Prostate gland (tissue), 2 donors: ENCODE measurements at regions of chr22 and their contacts with region 1.

Region 1: DNA sequence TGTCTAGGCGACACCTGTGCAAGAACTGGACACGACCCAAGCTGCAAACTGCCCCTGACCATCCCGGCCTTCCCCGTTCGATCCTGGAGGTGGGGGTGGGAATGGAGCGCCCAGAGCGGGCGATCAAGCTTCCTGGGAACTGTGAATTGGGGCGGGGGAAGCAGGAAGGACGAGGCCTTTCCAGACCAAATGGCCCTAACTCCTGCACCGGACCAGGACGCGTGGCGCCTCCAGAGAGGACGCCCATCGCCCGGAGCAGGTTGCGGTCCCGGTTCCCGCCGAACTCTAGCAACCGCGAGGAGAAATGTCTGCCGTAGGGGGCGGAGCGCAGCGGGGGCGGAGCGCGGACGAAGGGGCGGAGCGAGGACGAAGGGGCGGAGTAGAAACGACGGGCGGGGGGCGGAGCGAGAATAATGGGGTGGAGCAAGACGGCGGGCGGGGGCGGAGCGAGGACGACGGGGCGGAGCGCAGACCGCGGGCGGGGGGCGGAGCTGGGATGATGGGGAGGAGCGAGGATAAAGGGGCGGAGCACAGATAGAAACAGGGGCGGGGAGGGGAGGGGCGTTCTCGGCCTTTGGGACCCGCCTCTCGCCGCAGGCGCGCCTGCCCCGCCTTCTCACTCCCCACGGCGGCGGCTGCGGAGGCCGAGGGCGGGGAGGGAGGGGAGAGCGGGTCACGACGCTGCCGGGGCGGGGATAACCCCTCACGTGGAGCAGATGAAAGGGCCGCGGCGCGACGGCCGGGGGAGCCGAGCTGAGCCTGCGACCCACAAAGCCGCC is at the start of gene ZNRF3:
- DNase-seq: peak; percentile 96
- H3K4me3 ChIP-seq: peak within 1 kb of the TSS; percentile 63 to 70
- H3K27ac ChIP-seq: peak within 1 kb of the TSS; percentile 62 to 75
- H3K4me1 ChIP-seq: peaks cover 3% of the 10 kb centered on the region
- H3K27me3 ChIP-seq: no peaks in the 10 kb centered on the region
- CTCF ChIP-seq: peak in 1 of 4 experiments; percentile 16
- POLR2A ChIP-seq: peak; percentile 52
- total RNA-seq, gene ZNRF3: 38.5 to 46.1 TPM

Region 2: DNA sequence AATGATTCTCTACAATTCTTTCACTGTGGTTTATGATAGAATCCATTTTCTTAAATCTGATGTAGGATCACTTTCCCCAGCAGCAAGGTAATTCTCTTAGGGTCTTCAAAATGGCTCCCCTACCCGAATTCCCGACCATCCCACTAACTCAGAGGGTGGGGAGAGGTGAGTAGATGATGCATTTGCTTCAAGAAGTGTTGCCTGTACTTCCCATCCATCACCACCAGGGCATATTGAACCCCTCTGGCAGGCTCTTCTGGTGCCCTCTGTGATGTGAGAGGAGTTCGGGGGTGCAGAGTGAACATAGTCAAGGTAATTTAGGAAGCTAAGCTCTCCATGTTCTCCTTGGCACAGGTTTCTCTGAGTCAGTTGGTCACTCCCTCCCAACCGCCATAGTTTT is 52.6 kb after region 1 on chr22:
- intact Hi-C with region 1: loop called (anchors 5 kb)
- DNase-seq: no peak
- H3K4me3 ChIP-seq: no peak overlapping the region
- H3K27ac ChIP-seq: peak overlapping the region in 1 of 2 donors; percentile 11
- H3K4me1 ChIP-seq: no peaks in the 10 kb centered on the region
- H3K27me3 ChIP-seq: no peaks in the 10 kb centered on the region
- CTCF ChIP-seq: no peak
- POLR2A ChIP-seq: no peak

Region 3: DNA sequence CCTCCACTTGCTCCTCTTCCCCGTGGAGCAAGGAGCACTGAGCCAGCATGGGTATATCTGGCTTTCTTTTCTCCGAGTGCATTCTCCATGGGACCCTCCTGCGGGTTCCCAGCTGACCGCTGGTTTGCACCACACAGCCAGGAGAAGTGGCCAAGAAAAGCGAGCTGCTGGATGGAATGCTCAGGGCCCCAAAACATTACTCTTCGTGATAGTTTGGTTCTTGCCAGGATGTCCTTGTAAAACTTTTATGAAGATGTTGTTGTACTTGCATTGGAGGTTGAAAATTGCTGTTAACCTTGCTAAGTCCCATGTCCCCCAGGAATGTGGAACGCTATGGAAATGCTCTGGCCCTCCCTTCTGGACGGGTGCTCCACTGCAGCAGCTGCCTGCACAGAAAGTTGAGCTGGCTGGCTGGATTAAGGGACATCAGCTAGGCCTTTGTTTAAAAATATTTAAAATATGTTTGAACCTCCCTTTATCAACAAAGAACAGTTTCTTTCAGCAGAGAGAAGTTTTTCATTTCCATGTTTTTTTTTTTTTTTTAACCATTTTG is 69.0 kb after region 1 on chr22:
- intact Hi-C with region 1: loop called (anchors 2 kb)
- DNase-seq: peak; percentile 81
- H3K4me3 ChIP-seq: no peak overlapping the region
- H3K27ac ChIP-seq: peak overlapping the region; percentile 10 to 34
- H3K4me1 ChIP-seq: peaks cover 4% of the 10 kb centered on the region
- H3K27me3 ChIP-seq: no peaks in the 10 kb centered on the region
- CTCF ChIP-seq: peak in 3 of 4 experiments; percentile 40 to 65 (median 46)
- POLR2A ChIP-seq: no peak